Activated T-helper 2 cell treated with anti-CD3 and anti-CD28 coated beads, Interferon-gamma antibody, Interleukin-2, Interleukin-4, amounts not matched to agents 10 μg/mL and 5 μg/mL and 100 μg/mL, durations not matched to agents 14 hours and 24 hours and 36 hours (primary cell): ENCODE measurements at regions of chr12 and their contacts with region 1.

Region 1: DNA sequence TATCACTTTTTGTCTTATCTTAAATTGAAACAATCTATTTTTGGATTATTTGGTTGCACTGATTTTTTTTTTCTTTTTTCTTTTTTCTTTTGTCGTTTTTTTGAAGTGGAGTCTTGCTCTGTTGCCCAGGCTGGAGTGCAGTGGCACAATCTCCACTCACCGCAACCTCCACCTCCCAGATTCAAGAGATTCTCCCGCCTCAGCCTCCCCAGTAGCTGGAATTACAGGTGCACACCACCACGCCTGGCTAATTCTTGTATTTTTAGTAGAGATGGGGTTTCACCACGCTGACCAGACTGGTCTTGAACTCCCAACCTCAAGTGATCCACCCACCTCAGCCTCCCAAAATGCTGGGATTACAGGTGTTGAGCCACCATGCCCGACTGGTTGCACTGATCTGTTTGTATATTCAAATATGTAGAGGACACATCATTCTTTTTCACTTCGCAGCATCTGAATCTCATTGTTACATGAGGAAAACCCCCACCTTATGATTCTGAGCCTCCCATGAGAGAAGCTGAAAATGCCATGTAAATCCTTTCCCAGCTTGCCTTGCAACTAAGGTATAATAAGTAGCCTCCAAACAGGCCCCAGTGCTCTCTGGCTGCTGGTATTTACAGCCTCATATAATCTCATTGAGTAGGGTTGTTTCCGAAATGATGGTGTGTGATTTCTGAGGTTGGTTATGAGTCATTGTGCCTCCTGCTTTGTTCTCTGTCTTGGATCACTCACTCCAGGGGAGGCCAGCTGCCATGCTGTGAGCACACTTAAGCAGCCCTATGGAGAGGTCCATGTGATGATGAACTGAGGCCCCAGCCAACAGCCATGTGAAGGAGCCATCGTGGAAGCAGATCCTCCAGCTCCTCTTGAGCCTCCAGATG is 5.2 kb upstream of the HSP90B1 start:
- DNase-seq: peak; percentile 27
- H3K4me3 Mint-ChIP-seq: peak overlapping the region; percentile 66
- H3K27ac Mint-ChIP-seq: peak overlapping the region; percentile 78
- H3K4me1 Mint-ChIP-seq: peaks cover 36% of the 10 kb centered on the region
- H3K27me3 Mint-ChIP-seq: no peaks in the 10 kb centered on the region

Region 2: GRCh38 chr12:103470664-103471063 is 454.3 kb before region 1 on chr12:
- intact Hi-C with region 1: no loop called
- DNase-seq: no peak
- H3K4me3 Mint-ChIP-seq: no peak overlapping the region
- H3K27ac Mint-ChIP-seq: no peak overlapping the region
- H3K4me1 Mint-ChIP-seq: peaks cover 9% of the 10 kb centered on the region
- H3K27me3 Mint-ChIP-seq: peaks cover 2% of the 10 kb centered on the region

Region 3: DNA sequence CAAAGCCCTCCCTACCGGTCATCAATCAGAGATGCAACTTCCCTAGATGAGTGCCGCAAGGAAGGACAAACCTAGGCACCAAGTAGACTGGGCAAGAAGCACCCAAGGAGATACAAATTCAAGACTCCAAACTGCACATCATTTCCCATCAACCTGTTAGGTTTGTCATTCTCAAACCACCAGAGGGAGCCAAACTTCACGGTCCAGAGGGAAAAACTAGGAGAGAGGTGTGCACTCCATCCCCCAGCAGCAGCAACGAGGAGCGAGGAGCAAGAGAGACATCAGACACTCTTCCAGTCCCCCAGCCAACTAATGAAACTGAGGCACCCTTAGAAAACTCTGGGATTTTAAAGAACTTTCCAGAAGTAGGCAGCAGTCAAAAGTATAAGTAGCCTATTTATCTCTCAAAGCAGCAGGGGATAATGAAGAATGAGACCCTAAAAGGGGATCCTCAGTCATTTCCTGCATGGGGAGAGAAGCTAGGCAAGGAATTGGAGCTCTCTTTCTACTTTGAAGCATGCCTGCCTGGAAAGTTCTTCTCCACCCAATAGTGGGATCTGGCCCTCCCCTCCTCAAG is 47.0 kb before region 1 on chr12:
- intact Hi-C with region 1: loop called (anchors 1 kb)
- DNase-seq: peak; percentile 31
- H3K4me3 Mint-ChIP-seq: no peak overlapping the region
- H3K27ac Mint-ChIP-seq: no peak overlapping the region
- H3K4me1 Mint-ChIP-seq: peaks cover 30% of the 10 kb centered on the region
- H3K27me3 Mint-ChIP-seq: peaks cover 15% of the 10 kb centered on the region